Heart right ventricle (tissue), 16 donors: ENCODE measurements at regions of chr10 and their contacts with region 1.

Region 1: DNA sequence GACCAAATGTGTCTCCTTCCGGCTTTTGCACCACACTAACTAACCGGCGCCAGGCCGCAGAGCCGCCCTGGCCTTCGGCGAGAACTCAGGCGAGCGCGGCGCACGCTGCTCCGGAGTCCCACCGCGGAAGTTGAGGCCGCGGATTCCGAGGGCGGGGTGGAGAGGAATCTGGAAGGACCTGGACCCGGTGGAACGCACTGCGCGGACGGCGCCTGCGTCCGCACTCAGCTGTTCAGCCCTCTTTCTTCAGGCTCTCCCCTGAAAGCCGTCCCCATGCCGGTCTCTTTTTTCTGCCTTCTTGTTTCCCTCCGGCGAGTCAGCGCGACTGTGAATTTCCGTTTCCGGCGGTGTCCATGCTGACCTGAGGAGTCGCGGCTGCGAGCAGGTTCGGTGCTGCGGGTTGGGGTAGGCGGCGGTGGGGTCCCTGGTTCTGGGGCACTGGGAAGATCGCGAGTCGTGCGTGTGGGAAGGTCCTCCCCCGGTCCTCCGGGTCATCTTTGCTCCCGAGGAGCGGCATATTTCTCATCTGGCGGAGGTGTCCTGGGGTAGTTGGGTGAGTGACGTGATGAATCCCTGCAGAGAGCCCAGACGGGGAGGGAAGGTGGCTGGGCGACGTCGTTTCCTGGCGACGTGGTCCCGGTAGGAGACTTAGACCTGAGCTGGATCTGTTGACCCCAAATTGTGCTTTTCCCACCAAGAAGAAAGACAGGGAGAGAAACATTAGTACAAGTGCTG is at the start of gene BMS1:
- DNase-seq: peak; percentile 86 to 92
- ATAC-seq: peak; percentile 95 to 99 (median 96)
- H3K4me3 ChIP-seq: peak within 1 kb of the TSS; percentile 63 to 92 (median 76)
- H3K27ac ChIP-seq: peak within 1 kb of the TSS; percentile 87 to 99 (median 94)
- H3K4me1 ChIP-seq: peaks cover 0 to 21% (median 13%) of the 10 kb centered on the region in 9 donors
- H3K27me3 ChIP-seq: peaks cover 0 to 7% (median 0%) of the 10 kb centered on the region in 7 donors
- CTCF ChIP-seq: no peak
- total RNA-seq, gene BMS1: 11.6 to 16.5 (median 14.1) TPM

Region 2: DNA sequence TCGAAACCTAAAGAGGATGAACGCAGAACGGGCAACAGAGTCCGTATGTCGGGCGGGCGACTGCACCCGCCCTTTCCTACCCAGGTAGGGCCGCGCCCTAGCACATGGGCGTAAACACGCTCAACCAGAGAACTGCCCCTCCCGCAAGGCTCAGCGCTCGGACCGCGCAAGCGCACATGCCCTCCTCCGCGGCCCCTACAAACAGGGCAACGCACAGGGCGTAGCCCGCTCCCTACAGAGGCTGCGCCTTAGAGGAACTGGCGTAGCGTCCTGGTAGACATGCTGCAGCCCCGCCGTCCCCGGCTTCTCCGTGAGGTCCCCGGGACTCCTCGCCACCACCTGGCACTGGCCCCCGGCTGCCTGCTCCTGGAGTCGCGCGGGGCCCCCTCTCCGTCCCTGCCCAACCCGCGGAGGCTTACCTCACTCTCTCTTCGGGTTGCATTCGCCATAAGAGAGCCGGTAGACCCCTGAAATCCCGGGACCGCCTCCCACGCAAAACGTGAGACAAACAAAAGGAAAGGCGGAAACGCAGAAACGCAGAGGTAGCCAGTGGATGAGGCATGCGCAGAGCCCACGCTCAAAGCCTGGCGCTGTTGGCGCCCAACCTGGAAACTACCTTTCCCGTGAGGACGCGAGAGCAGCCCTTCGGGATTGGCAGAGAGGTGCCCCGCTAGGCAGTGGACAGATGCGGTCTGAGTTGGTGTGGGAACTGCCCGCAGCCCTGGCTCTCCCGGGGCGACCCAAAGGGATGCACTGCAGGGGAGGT is 144.4 kb before region 1 on chr10 and contains the start of gene ZNF33B:
- intact Hi-C with region 1: loop called in 2 of 10 experiments (anchors 1 to 2 kb)
- DNase-seq: peak; percentile 91 to 95
- ATAC-seq: peak; percentile 98 to 100 (median 99)
- H3K4me3 ChIP-seq: peak within 1 kb of the TSS; percentile 59 to 88 (median 80)
- H3K27ac ChIP-seq: peak within 1 kb of the TSS; percentile 67 to 95 (median 92)
- H3K4me1 ChIP-seq: peaks cover 0 to 12% (median 5%) of the 10 kb centered on the region in 9 donors
- H3K27me3 ChIP-seq: no peaks in the 10 kb centered on the region
- CTCF ChIP-seq: no peak
- total RNA-seq, gene ZNF33B: 9.3 to 19.3 (median 14.2) TPM

Region 3: GRCh38 chr10:42753126-42753506 is 29.5 kb before region 1 on chr10:
- intact Hi-C with region 1: loop called in 4 of 10 experiments (anchors 1 to 2 kb)
- DNase-seq: peak; percentile 78 to 83
- ATAC-seq: peak; percentile 89 to 95 (median 92)
- H3K4me3 ChIP-seq: peak overlapping the region; percentile 39 to 65 (median 58)
- H3K27ac ChIP-seq: no peak overlapping the region
- H3K4me1 ChIP-seq: peaks cover 5 to 37% (median 24%) of the 10 kb centered on the region in 9 donors
- H3K27me3 ChIP-seq: peaks cover 7 to 84% (median 82%) of the 10 kb centered on the region in 7 donors
- CTCF ChIP-seq: peak; percentile 61 to 92 (median 86)

Region 4: DNA sequence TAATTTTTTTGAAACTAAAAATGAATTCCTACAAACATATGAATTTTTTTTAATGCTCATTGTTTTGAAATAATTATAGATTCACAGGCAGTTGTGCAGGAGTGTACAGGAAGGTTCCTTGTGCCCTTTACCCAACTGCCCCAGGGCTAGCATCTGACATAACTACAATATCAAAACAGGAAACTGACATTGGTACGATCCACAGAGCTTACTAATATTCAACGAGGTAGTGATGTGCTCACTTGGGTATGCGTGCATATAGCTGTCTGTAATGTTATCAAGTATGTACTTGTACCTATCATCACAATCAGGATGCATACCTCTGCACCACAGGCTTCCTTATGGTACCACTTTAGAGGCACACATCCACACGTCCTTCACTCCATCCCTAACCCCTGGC is 68.3 kb after region 1 on chr10:
- intact Hi-C with region 1: no loop called
- DNase-seq: no peak
- ATAC-seq: no peak
- H3K4me3 ChIP-seq: no peak overlapping the region
- H3K27ac ChIP-seq: no peak overlapping the region
- H3K4me1 ChIP-seq: no peaks in the 10 kb centered on the region
- H3K27me3 ChIP-seq: peaks cover 0 to 42% (median 14%) of the 10 kb centered on the region in 7 donors
- CTCF ChIP-seq: no peak

Region 5: DNA sequence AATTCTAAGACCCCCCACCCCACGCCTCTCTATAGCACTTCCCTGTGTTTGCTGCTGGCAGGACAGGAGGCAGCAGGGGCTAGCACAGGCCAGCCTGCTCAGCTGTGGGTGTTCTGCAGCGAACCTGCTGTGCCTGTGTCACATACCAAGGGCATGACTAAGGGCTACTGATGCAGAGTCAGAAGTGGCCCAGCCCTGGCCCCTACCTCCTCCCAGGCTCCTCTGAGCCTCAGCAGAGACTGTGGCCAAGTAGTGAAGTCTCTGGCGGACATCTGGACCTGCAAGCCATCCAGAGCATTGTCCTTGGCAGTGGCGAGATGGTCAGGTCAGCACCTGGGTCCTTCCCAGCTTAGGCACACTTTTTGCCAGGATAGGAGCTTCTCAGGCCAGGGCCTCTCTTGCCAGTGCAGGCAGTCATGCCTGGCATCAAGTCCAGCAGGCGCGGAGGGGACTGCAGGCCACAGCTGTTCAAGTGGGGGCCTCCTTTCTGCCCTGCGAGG is 177.9 kb after region 1 on chr10:
- intact Hi-C with region 1: no loop called
- DNase-seq: no peak
- ATAC-seq: peak; percentile 22 to 82 (median 60)
- H3K4me3 ChIP-seq: no peak overlapping the region
- H3K27ac ChIP-seq: peak overlapping the region in 8 of 10 donors; percentile 2 to 69 (median 52)
- H3K4me1 ChIP-seq: peaks cover 0 to 39% (median 26%) of the 10 kb centered on the region in 9 donors
- H3K27me3 ChIP-seq: no peaks in the 10 kb centered on the region
- CTCF ChIP-seq: no peak